ENCODE measurements at regions of chr1 and their contacts with region 1.

Region 1: DNA sequence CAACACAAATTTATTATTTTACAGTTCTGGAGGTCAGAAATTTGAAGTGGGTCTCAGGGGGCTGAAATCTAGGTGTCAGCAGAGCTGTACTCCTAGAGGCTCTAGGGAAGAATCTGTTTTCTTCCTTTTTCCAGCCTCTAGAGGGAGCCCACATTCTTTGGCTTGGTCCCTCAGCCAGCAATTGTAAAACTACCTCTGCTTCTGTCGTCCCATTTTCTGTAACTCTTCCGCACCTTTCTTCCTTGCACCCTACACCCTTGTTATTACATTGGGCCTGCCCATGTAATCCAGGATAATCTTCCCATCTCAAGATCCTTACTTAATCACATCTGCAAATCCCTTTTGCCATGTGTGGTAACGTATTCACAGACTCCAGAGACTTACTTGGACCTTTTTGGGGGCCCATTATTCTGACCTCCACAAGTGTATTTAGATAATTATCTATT is 24.8 kb upstream of the THEM4 start:
- DNase-seq: peak; percentile 54 to 77 (median 61)
- ATAC-seq: peak; percentile 97
- H3K4me3 ChIP-seq: no peak overlapping the region
- H3K27ac ChIP-seq: no peak overlapping the region
- H3K4me1 ChIP-seq: peaks cover 0 to 7% of the 10 kb centered on the region in 2 experiments; a peak in 2 of 5 replicates
- H3K27me3 ChIP-seq: no peaks in the 10 kb centered on the region
- CTCF ChIP-seq: peak; percentile 81 to 96 (median 91)
- EP300 ChIP-seq: no peak
- POLR2A ChIP-seq: no peak
- RAD21 ChIP-seq: peak; percentile 88 to 95

Region 2: GRCh38 chr1:151968058-151968457 is 34.0 kb after region 1 on chr1:
- CTCF ChIA-PET with region 1: interaction called, 4 read pairs
- POLR2A ChIA-PET with region 1: interaction called, 3 read pairs
- in situ Hi-C with region 1: no loop called
- intact Hi-C with region 1: loop called (anchors 1 kb)
- DNase-seq: peak in 2 of 4 experiments; percentile 51 to 68
- ATAC-seq: peak; percentile 83
- H3K4me3 ChIP-seq: no peak overlapping the region
- H3K27ac ChIP-seq: no peak overlapping the region
- H3K4me1 ChIP-seq: peaks cover 0 to 9% of the 10 kb centered on the region in 2 experiments; a peak in 4 of 5 replicates
- H3K27me3 ChIP-seq: peaks cover 0 to 4% of the 10 kb centered on the region in 2 experiments; a peak in 2 of 5 replicates
- CTCF ChIP-seq: peak; percentile 81 to 94 (median 83)
- EP300 ChIP-seq: no peak
- POLR2A ChIP-seq: no peak
- RAD21 ChIP-seq: peak; percentile 87 to 95

Region 3: DNA sequence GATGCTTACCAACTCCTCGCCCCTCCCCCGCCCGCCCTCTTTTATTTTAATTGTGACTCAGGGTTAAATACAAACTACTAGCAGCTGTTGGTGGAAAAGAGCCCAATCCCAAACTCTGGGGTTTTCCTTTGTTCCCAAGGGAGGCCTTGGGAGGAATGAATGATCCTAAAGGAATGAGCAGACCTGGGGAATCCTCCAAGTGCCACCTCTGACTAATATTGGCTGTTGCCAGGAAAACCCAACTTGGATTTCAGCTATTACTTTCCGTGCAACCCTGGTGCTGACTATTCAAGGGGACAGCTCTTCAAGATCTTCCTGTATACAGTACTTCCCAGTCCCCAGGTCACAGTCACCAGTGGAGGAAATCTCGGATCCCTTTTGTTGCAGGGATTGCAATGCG is 60.9 kb after region 1 on chr1:
- CTCF ChIA-PET with region 1: interaction called, 33 read pairs
- POLR2A ChIA-PET with region 1: interaction called, 3 read pairs
- in situ Hi-C with region 1: no loop called
- intact Hi-C with region 1: loop called (anchors 1 kb)
- DNase-seq: no peak
- ATAC-seq: no peak
- H3K4me3 ChIP-seq: no peak overlapping the region
- H3K27ac ChIP-seq: no peak overlapping the region
- H3K4me1 ChIP-seq: peaks cover 15 to 26% of the 10 kb centered on the region in 2 experiments
- H3K27me3 ChIP-seq: peaks cover 25 to 41% of the 10 kb centered on the region in 2 experiments
- CTCF ChIP-seq: no peak
- EP300 ChIP-seq: no peak
- POLR2A ChIP-seq: no peak
- RAD21 ChIP-seq: no peak

Region 4: DNA sequence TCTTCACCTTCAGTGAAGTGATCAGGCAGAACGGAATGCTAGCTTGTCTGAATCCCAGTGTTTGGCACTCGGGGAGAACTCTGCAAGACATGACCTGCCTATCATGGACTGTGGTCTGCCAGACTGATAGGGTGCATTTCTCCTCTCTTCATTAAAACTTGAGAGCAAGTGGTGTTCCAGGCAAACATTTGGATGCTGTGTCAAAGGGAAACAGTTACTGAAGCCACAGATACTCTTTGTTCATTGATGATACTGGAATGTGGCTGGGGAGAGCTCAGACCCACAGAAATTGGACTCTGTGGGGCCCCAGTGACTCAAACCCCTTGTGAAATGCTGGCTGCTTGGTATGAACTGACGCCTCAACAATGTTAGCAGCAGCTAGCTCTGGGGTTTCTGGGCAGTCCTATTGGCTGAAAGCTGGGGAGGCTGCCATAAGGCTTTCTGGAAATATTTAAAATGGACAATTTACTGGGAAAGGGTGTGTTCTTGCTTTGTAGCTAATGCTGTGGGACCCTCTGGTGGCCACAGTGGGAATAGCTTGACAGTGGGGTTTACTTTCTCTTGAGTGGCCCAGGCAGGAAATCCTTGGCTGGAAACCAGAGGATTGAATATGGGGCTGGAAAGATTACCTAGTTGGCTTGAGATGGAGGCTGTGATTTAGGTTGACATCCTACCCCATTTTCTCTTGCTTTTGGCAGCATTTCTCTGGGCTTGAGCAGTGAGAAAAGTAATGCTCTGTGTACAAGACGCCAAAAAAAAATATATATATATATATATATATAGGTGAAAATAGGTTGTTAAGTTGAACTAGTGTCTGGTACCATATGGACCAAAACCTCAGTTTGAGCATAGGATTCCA is 67.5 kb after region 1 on chr1:
- CTCF ChIA-PET with region 1: interaction called, 33 read pairs
- POLR2A ChIA-PET with region 1: interaction called, 7 read pairs
- in situ Hi-C with region 1: no loop called
- intact Hi-C with region 1: loop called (anchors 1 kb)
- DNase-seq: peak; percentile 68 to 85 (median 72)
- ATAC-seq: peak; percentile 89
- H3K4me3 ChIP-seq: no peak overlapping the region
- H3K27ac ChIP-seq: no peak overlapping the region
- H3K4me1 ChIP-seq: no peaks in the 10 kb centered on the region
- H3K27me3 ChIP-seq: peaks cover 15% of the 10 kb centered on the region in 2 experiments; a peak in 3 of 5 replicates
- CTCF ChIP-seq: peak; percentile 84 to 93 (median 90)
- EP300 ChIP-seq: no peak
- POLR2A ChIP-seq: no peak
- RAD21 ChIP-seq: peak; percentile 89 to 94

Region 5: GRCh38 chr1:152013664-152014237 is 79.7 kb after region 1 on chr1:
- CTCF ChIA-PET with region 1: no interaction called
- POLR2A ChIA-PET with region 1: interaction called, 4 read pairs
- in situ Hi-C with region 1: loop called (anchors 5 kb)
- intact Hi-C with region 1: no loop called
- DNase-seq: peak; percentile 37 to 72 (median 56)
- ATAC-seq: peak; percentile 82
- H3K4me3 ChIP-seq: no peak overlapping the region
- H3K27ac ChIP-seq: no peak overlapping the region
- H3K4me1 ChIP-seq: no peaks in the 10 kb centered on the region
- H3K27me3 ChIP-seq: peaks cover 2 to 12% of the 10 kb centered on the region in 2 experiments; a peak in 2 of 5 replicates
- CTCF ChIP-seq: peak; percentile 74 to 82 (median 80)
- EP300 ChIP-seq: no peak
- POLR2A ChIP-seq: no peak
- RAD21 ChIP-seq: peak; percentile 23 to 60; a peak in 3 of 4 replicates

Region 6: GRCh38 chr1:152189657-152190442 is 255.8 kb after region 1 on chr1:
- CTCF ChIA-PET with region 1: no interaction called
- POLR2A ChIA-PET with region 1: no interaction called
- in situ Hi-C with region 1: no loop called
- intact Hi-C with region 1: loop called (anchors 10 kb)
- DNase-seq: peak; percentile 59 to 67 (median 61)
- ATAC-seq: peak; percentile 88
- H3K4me3 ChIP-seq: no peak overlapping the region
- H3K27ac ChIP-seq: no peak overlapping the region
- H3K4me1 ChIP-seq: peaks cover 0 to 8% of the 10 kb centered on the region in 2 experiments; a peak in 1 of 5 replicates
- H3K27me3 ChIP-seq: no peaks in the 10 kb centered on the region
- CTCF ChIP-seq: peak; percentile 79 to 85 (median 80)
- EP300 ChIP-seq: no peak
- POLR2A ChIP-seq: no peak
- RAD21 ChIP-seq: peak; percentile 62 to 78

Measured in K562 (cell line).